AG04449 (cell line): ENCODE measurements at regions of chr19 and their contacts with region 1.

Region 1: DNA sequence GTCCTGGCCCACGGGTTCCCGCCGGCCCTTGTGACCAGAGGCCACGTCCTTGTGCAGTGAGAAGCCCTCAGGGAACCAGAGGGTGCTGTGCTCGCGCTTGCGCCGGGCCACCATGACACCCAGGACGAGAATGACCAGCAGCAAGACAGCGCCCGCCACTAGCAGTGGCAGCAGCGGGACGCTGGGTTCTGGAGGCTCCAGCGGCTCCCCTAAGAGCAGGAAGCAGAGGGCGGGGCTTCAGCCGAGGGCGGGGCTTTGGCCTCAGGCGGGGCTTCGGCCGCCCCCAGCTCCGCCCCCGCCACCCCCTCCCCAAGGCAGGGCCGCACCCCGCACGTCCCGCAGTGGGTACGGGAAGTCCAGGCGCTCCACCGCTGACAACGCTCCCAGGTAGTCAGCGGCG is 30.4 kb downstream of the NOTCH3 start:
- DNase-seq: no peak
- H3K4me3 ChIP-seq: no peak overlapping the region
- CTCF ChIP-seq: no peak

Region 2: GRCh38 chr19:15154002-15154612 is 16.2 kb before region 1 on chr19:
- CTCF ChIA-PET with region 1: interaction called, 28 read pairs
- POLR2A ChIA-PET with region 1: interaction called, 3 read pairs
- DNase-seq: no peak
- H3K4me3 ChIP-seq: no peak overlapping the region
- CTCF ChIP-seq: peak; percentile 57